SK-N-SH (cell line): ENCODE measurements at regions of chr7 and their contacts with region 1.

Region 1: GRCh38 chr7:154503962-154504550 is 451.9 kb downstream of the DPP6 start:
- DNase-seq: peak; percentile 47
- H3K4me3 ChIP-seq: no peak overlapping the region; a peak in 1 of 4 replicates
- H3K27ac ChIP-seq: no peak overlapping the region
- H3K4me1 ChIP-seq: no peaks in the 10 kb centered on the region
- H3K27me3 ChIP-seq: no peaks in the 10 kb centered on the region
- CTCF ChIP-seq: peak; percentile 78
- EP300 ChIP-seq: no peak
- RAD21 ChIP-seq: peak; percentile 82

Region 2: GRCh38 chr7:154167807-154168206 is 336.2 kb before region 1 on chr7:
- CTCF ChIA-PET with region 1: interaction called, 10 read pairs
- POLR2A ChIA-PET with region 1: no interaction called
- DNase-seq: peak; percentile 68
- H3K4me3 ChIP-seq: no peak overlapping the region
- H3K27ac ChIP-seq: peak overlapping the region in 1 of 2 experiments; percentile 99; a peak in 2 of 4 replicates
- H3K4me1 ChIP-seq: peaks cover 0 to 28% of the 10 kb centered on the region in 2 experiments; a peak in 2 of 4 replicates
- H3K27me3 ChIP-seq: no peaks in the 10 kb centered on the region
- CTCF ChIP-seq: no peak
- EP300 ChIP-seq: peak in 1 of 2 experiments; percentile 95; a peak in 2 of 4 replicates
- RAD21 ChIP-seq: peak; percentile 42; the same call in 1 of the 2 replicates

Region 3: GRCh38 chr7:154433632-154434598 is 70.1 kb before region 1 on chr7:
- CTCF ChIA-PET with region 1: no interaction called
- POLR2A ChIA-PET with region 1: no interaction called
- DNase-seq: no peak
- H3K4me3 ChIP-seq: no peak overlapping the region
- H3K27ac ChIP-seq: no peak overlapping the region
- H3K4me1 ChIP-seq: no peaks in the 10 kb centered on the region; a peak in 1 of 4 replicates
- H3K27me3 ChIP-seq: no peaks in the 10 kb centered on the region
- CTCF ChIP-seq: no peak
- EP300 ChIP-seq: no peak
- RAD21 ChIP-seq: no peak

Region 4: GRCh38 chr7:154474903-154475520 is 29.0 kb before region 1 on chr7:
- CTCF ChIA-PET with region 1: interaction called, 16 read pairs
- POLR2A ChIA-PET with region 1: no interaction called
- DNase-seq: no peak
- H3K4me3 ChIP-seq: no peak overlapping the region
- H3K27ac ChIP-seq: no peak overlapping the region
- H3K4me1 ChIP-seq: no peaks in the 10 kb centered on the region
- H3K27me3 ChIP-seq: no peaks in the 10 kb centered on the region
- CTCF ChIP-seq: no peak
- EP300 ChIP-seq: no peak
- RAD21 ChIP-seq: no peak

Region 5: GRCh38 chr7:154493594-154493993 is 10.5 kb before region 1 on chr7:
- CTCF ChIA-PET with region 1: interaction called, 40 read pairs
- POLR2A ChIA-PET with region 1: no interaction called
- DNase-seq: no peak
- H3K4me3 ChIP-seq: no peak overlapping the region
- H3K27ac ChIP-seq: no peak overlapping the region
- H3K4me1 ChIP-seq: peaks cover 0 to 3% of the 10 kb centered on the region in 2 experiments; a peak in 2 of 4 replicates
- H3K27me3 ChIP-seq: no peaks in the 10 kb centered on the region
- CTCF ChIP-seq: no peak
- EP300 ChIP-seq: no peak
- RAD21 ChIP-seq: no peak

Region 6: GRCh38 chr7:154584352-154585252 is 80.5 kb after region 1 on chr7:
- CTCF ChIA-PET with region 1: interaction called, 11 read pairs
- POLR2A ChIA-PET with region 1: no interaction called
- DNase-seq: peak; percentile 56
- H3K4me3 ChIP-seq: no peak overlapping the region
- H3K27ac ChIP-seq: no peak overlapping the region
- H3K4me1 ChIP-seq: peaks cover 0 to 5% of the 10 kb centered on the region in 2 experiments; a peak in 1 of 4 replicates
- H3K27me3 ChIP-seq: no peaks in the 10 kb centered on the region
- CTCF ChIP-seq: peak; percentile 16
- EP300 ChIP-seq: no peak
- RAD21 ChIP-seq: peak; percentile 55

Region 7: DNA sequence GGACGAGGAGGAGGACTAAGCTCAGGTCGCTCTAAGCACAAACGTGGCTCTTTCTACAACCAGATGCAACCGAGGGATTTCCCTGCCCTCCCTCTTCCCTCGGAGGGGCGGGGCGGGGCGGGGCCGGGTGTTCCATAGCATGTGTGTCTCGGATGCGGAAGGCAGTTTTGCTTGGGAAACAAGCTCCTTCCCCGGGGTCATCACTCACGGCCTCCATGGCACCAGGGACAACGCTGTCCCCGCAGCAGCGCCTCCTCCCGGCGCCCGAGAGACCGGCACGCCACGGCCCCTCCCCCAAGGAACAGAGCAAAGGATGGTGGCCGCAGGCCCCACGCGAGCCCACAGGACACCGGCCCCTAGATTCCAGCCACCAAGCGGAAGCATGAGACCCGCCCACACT is 388.4 kb after region 1 on chr7:
- CTCF ChIA-PET with region 1: no interaction called
- POLR2A ChIA-PET with region 1: no interaction called
- DNase-seq: no peak
- H3K4me3 ChIP-seq: no peak overlapping the region
- H3K27ac ChIP-seq: no peak overlapping the region
- H3K4me1 ChIP-seq: no peaks in the 10 kb centered on the region; a peak in 1 of 4 replicates
- H3K27me3 ChIP-seq: no peaks in the 10 kb centered on the region
- CTCF ChIP-seq: no peak
- EP300 ChIP-seq: no peak
- RAD21 ChIP-seq: no peak